Dorsolateral prefrontal cortex (tissue), 120 donors: ENCODE measurements at regions of chr10 and their contacts with region 1.

Region 1: DNA sequence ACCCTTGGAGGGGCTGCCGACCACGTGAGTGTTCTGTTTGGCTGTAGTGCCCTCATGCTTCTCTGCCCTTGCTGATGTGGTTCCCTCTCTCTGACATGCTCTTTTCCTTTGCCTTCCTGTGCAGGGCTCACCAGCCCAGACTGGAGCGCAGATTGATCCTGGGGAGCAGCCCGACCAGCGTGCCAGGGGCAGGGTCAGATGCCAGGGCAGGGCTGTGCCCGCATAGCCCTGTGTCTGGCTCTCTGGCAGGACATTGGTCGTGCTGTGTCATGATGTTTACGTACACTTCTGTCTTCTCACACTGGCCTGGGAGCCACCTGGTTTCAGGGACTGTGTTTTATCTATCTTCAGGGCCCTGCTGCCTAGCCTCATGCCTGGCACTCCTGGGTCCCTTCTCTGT is 300.8 kb downstream of the CAMK1D start:
- DNase-seq: no peak
- H3K4me3 ChIP-seq: no peak overlapping the region
- H3K27ac ChIP-seq: peak overlapping the region in 5 of 59 donors; percentile 11 to 55 (median 26)
- H3K27me3 ChIP-seq: no peaks in the 10 kb centered on the region
- CTCF ChIP-seq: no peak

Region 2: GRCh38 chr10:12579954-12580858 is 69.9 kb before region 1 on chr10:
- intact Hi-C with region 1: no loop called
- DNase-seq: no peak
- H3K4me3 ChIP-seq: no peak overlapping the region
- H3K27ac ChIP-seq: no peak overlapping the region
- H3K27me3 ChIP-seq: no peaks in the 10 kb centered on the region
- CTCF ChIP-seq: no peak

Region 3: DNA sequence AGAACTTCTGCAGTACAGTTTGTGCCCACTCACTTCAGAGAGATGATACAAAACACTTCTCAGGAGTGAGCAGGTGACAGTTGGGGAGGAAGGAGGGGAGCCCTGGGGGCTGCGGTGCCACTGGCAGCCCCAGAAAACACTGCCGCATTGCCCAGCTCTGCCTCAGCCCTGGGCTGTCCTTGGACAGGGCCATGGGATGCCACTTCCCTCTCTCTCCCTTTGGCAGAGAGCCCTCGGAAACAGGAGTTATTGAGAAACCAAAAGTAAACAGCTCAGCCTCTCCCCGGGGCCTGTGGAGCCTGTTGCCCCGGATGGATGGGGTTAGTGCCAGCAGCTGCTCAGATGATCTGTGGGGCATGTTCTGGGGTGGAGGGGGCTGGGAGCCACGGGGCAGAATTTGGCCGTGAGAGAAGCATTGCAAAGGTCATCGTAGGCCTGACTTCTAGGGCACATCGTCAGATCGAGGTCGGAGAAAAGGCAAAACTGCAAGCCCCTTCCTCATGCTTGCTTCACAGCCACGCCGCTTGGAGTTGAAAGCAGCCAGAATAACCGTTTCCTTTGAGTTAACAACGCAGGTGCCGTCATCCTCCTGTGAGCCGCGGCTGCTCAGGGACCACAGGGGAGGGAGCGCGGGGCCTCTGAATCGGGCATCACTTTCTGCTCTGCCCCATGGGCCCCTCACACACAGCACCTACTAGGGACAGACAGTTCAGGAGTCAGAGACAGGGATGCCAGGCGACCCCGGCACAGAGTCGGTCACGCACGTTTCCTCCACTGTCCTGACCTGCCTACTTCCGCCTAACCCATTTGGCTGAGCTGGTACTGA is 44.3 kb before region 1 on chr10:
- intact Hi-C with region 1: loop called in 1 of 2 experiments (anchors 5 kb)
- DNase-seq: peak in 7 of 10 donors; percentile 34 to 70 (median 54)
- H3K4me3 ChIP-seq: peak overlapping the region in 56 of 59 donors; percentile 1 to 62 (median 39)
- H3K27ac ChIP-seq: peak overlapping the region in 52 of 59 donors; percentile 11 to 82 (median 60)
- H3K27me3 ChIP-seq: no peaks in the 10 kb centered on the region
- CTCF ChIP-seq: no peak